Caco-2 (cell line): ENCODE measurements at regions of chr3 and their contacts with region 1.

Region 1: GRCh38 chr3:102673271-102674115 is 238.7 kb downstream of the ZPLD1 start:
- DNase-seq: peak; percentile 52 to 78
- H3K4me3 ChIP-seq: peak overlapping the region; percentile 11; the same call in 1 of the 2 replicates
- H3K4me3 Mint-ChIP-seq: peak overlapping the region; percentile 42
- H3K27ac Mint-ChIP-seq: no peak overlapping the region
- H3K4me1 ChIP-seq: peaks cover 11% of the 10 kb centered on the region; the same call in 1 of the 2 replicates
- H3K4me1 Mint-ChIP-seq: no peaks in the 10 kb centered on the region
- H3K27me3 ChIP-seq: no peaks in the 10 kb centered on the region
- H3K27me3 Mint-ChIP-seq: no peaks in the 10 kb centered on the region
- CTCF ChIP-seq: peak; percentile 81

Region 2: DNA sequence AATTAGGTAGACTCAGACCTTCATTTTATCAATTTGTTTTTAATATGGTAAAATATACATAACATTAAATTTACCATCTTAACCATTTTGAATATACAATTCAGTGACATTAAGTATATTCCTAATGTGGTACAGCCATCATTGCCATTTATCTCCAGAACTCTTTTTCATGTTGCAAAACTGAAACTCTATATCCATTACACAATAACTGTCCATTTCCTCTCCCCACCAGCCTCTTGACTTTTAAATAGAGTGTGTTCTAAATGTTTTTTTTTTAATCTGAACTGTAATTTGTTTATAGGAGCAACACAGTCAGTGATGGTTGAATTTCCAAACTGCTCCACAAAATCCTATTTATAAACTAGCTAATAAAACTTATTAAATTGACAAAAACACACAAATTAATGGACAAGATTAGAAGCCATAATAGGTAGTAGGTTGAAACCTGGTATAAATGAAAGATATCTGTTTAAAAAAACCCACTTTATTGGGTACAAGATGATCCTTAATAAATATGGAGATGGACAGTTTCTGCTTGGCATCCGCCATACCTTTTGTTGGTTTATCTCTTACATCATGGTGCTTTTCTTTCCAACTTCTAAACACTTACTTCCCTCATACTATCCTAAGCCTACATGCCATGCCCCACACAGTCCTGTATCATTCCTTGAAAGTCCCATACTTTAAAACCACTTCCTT is 96.3 kb before region 1 on chr3:
- CTCF ChIA-PET with region 1: no interaction called
- POLR2A ChIA-PET with region 1: no interaction called
- intact Hi-C with region 1: no loop called
- DNase-seq: no peak
- H3K4me3 ChIP-seq: no peak overlapping the region
- H3K4me3 Mint-ChIP-seq: no peak overlapping the region
- H3K27ac Mint-ChIP-seq: no peak overlapping the region
- H3K4me1 ChIP-seq: no peaks in the 10 kb centered on the region
- H3K4me1 Mint-ChIP-seq: no peaks in the 10 kb centered on the region
- H3K27me3 ChIP-seq: no peaks in the 10 kb centered on the region
- H3K27me3 Mint-ChIP-seq: no peaks in the 10 kb centered on the region
- CTCF ChIP-seq: no peak

Region 3: GRCh38 chr3:102745882-102746281 is 72.4 kb after region 1 on chr3:
- CTCF ChIA-PET with region 1: interaction called, 19 read pairs
- POLR2A ChIA-PET with region 1: no interaction called
- intact Hi-C with region 1: loop called (anchors 1 kb)
- DNase-seq: no peak
- H3K4me3 ChIP-seq: no peak overlapping the region
- H3K4me3 Mint-ChIP-seq: no peak overlapping the region
- H3K27ac Mint-ChIP-seq: no peak overlapping the region
- H3K4me1 ChIP-seq: no peaks in the 10 kb centered on the region
- H3K4me1 Mint-ChIP-seq: no peaks in the 10 kb centered on the region
- H3K27me3 ChIP-seq: no peaks in the 10 kb centered on the region
- H3K27me3 Mint-ChIP-seq: no peaks in the 10 kb centered on the region
- CTCF ChIP-seq: peak; percentile 10 to 11

Region 4: DNA sequence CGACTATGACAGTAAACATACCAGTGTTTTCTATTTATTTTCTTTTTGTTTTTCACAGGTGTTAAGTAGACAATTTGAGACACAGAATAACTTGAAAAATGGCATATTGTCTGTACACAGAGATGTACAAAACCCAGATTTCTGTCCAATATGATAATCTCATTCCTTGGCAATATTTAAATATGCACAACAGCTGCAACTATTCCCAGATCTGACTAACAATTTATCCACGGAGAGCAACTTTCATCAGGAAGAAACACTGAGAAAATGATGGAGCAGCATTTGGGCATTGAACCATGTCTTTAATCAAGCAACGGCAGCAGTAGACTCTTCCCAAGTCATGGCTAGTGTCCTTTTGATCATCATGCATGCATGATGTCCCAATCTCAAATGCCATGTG is 213.9 kb after region 1 on chr3:
- CTCF ChIA-PET with region 1: no interaction called
- POLR2A ChIA-PET with region 1: no interaction called
- intact Hi-C with region 1: loop called (anchors 5 kb)
- DNase-seq: no peak
- H3K4me3 ChIP-seq: no peak overlapping the region
- H3K4me3 Mint-ChIP-seq: no peak overlapping the region
- H3K27ac Mint-ChIP-seq: no peak overlapping the region
- H3K4me1 ChIP-seq: peaks cover 27% of the 10 kb centered on the region
- H3K4me1 Mint-ChIP-seq: peaks cover 13% of the 10 kb centered on the region
- H3K27me3 ChIP-seq: no peaks in the 10 kb centered on the region
- H3K27me3 Mint-ChIP-seq: no peaks in the 10 kb centered on the region
- CTCF ChIP-seq: no peak

Region 5: DNA sequence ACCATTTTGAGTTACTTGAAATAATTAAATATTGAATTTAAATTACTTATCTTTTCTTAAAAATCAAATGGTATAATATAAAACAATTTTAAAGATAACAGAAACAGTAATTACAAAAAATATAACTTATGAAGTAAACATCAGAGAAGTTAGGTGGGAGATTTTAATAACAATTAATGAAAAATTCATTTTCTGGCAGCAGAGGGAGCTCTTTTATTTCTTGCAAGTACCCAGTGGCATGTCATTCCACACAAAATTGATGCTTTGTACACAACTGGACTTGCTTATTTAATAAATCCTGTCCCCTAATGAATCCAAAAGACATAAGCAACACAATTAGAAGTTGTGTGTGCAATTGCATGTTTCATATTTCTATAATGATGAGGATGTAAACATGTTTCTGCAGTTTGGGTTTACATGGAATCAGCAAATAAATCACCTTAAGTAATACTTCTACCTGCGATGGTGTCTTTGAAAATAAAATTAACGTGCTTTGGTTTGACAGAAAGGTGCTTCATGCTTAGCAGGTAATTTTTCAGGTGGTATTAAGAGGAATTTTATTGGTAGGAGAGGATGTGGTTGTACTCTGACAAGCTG is 622.6 kb after region 1 on chr3:
- CTCF ChIA-PET with region 1: no interaction called
- POLR2A ChIA-PET with region 1: no interaction called
- intact Hi-C with region 1: loop called (anchors 5 kb)
- DNase-seq: peak in 1 of 2 experiments; percentile 21
- H3K4me3 ChIP-seq: no peak overlapping the region
- H3K4me3 Mint-ChIP-seq: no peak overlapping the region
- H3K27ac Mint-ChIP-seq: no peak overlapping the region
- H3K4me1 ChIP-seq: no peaks in the 10 kb centered on the region
- H3K4me1 Mint-ChIP-seq: no peaks in the 10 kb centered on the region
- H3K27me3 ChIP-seq: no peaks in the 10 kb centered on the region
- H3K27me3 Mint-ChIP-seq: no peaks in the 10 kb centered on the region
- CTCF ChIP-seq: peak; percentile 10 to 39

Region 6: GRCh38 chr3:103609469-103609868 is 936.0 kb after region 1 on chr3:
- CTCF ChIA-PET with region 1: interaction called, 3 read pairs
- POLR2A ChIA-PET with region 1: no interaction called
- intact Hi-C with region 1: loop called (anchors 10 kb)
- DNase-seq: no peak
- H3K4me3 ChIP-seq: no peak overlapping the region
- H3K4me3 Mint-ChIP-seq: no peak overlapping the region
- H3K27ac Mint-ChIP-seq: no peak overlapping the region
- H3K4me1 ChIP-seq: no peaks in the 10 kb centered on the region
- H3K4me1 Mint-ChIP-seq: no peaks in the 10 kb centered on the region
- H3K27me3 ChIP-seq: no peaks in the 10 kb centered on the region
- H3K27me3 Mint-ChIP-seq: no peaks in the 10 kb centered on the region
- CTCF ChIP-seq: peak in 1 of 2 experiments; percentile 8